H1 (cell line): ENCODE measurements at regions of chrX and their contacts with region 1.

Region 1: GRCh38 chrX:129925305-129926092 is 19.5 kb downstream of the UTP14A start:
- DNase-seq: peak; percentile 23 to 71
- H3K4me3 ChIP-seq: no peak overlapping the region
- H3K27ac ChIP-seq: no peak overlapping the region
- H3K4me1 ChIP-seq: no peaks in the 10 kb centered on the region
- H3K27me3 ChIP-seq: no peaks in the 10 kb centered on the region
- CTCF ChIP-seq: peak; percentile 48 to 64 (median 62)
- EP300 ChIP-seq: no peak
- POLR2A ChIP-seq: no peak
- RAD21 ChIP-seq: peak; percentile 72 to 76

Region 2: GRCh38 chrX:129872524-129872923 is 53.0 kb before region 1 on chrX:
- CTCF ChIA-PET with region 1: no interaction called
- POLR2A ChIA-PET with region 1: no interaction called
- DNase-seq: no peak
- H3K4me3 ChIP-seq: no peak overlapping the region
- H3K27ac ChIP-seq: no peak overlapping the region
- H3K4me1 ChIP-seq: peaks cover 0 to 2% (median 0%) of the 10 kb centered on the region in 4 experiments; a peak in 1 of 7 replicates
- H3K27me3 ChIP-seq: no peaks in the 10 kb centered on the region
- CTCF ChIP-seq: no peak
- EP300 ChIP-seq: no peak
- POLR2A ChIP-seq: no peak
- RAD21 ChIP-seq: no peak

Region 3: GRCh38 chrX:129905787-129906580 is 19.5 kb before region 1 on chrX and contains the start of gene UTP14A:
- CTCF ChIA-PET with region 1: interaction called, 8 read pairs
- POLR2A ChIA-PET with region 1: interaction called, 13 read pairs
- DNase-seq: peak; percentile 64 to 78
- H3K4me3 ChIP-seq: peak within 1 kb of the TSS; percentile 68 to 95 (median 80)
- H3K27ac ChIP-seq: peak within 1 kb of the TSS; percentile 67; the same call in 1 of the 2 replicates
- H3K4me1 ChIP-seq: no peaks in the 10 kb centered on the region
- H3K27me3 ChIP-seq: no peaks in the 10 kb centered on the region
- CTCF ChIP-seq: no peak
- EP300 ChIP-seq: no peak
- POLR2A ChIP-seq: peak; percentile 14 to 87
- RAD21 ChIP-seq: no peak; a peak in 1 of 4 replicates
- total RNA-seq, gene UTP14A: 24.0 and 25.7 TPM in 2 replicates

Region 4: GRCh38 chrX:130060122-130061069 is 134.9 kb after region 1 on chrX:
- CTCF ChIA-PET with region 1: interaction called, 15 read pairs
- POLR2A ChIA-PET with region 1: interaction called, 4 read pairs
- DNase-seq: peak in 1 of 2 experiments; percentile 95
- H3K4me3 ChIP-seq: peak overlapping the region; percentile 17 to 58 (median 22); a peak in 6 of 8 replicates
- H3K27ac ChIP-seq: no peak overlapping the region
- H3K4me1 ChIP-seq: peaks cover 0 to 13% (median 2%) of the 10 kb centered on the region in 4 experiments; a peak in 6 of 7 replicates
- H3K27me3 ChIP-seq: peaks cover 4 to 28% (median 21%) of the 10 kb centered on the region in 4 experiments
- CTCF ChIP-seq: peak; percentile 70 to 78 (median 71)
- EP300 ChIP-seq: no peak
- POLR2A ChIP-seq: no peak
- RAD21 ChIP-seq: peak; percentile 72 to 84